ENCODE measurements at regions of chr6 and their contacts with region 1.

Region 1: GRCh38 chr6:131909408-131910218 is 41.6 kb downstream of the CCN2 start:
- DNase-seq: peak; percentile 60
- ATAC-seq: peak; percentile 97
- H3K4me3 ChIP-seq: no peak overlapping the region
- H3K27ac ChIP-seq: no peak overlapping the region
- H3K4me1 ChIP-seq: no peaks in the 10 kb centered on the region; the same call in 1 of the 2 replicates
- H3K27me3 ChIP-seq: peaks cover 11% of the 10 kb centered on the region; the same call in 1 of the 2 replicates
- CTCF ChIP-seq: peak; percentile 77; the same call in 1 of the 2 replicates

Region 2: DNA sequence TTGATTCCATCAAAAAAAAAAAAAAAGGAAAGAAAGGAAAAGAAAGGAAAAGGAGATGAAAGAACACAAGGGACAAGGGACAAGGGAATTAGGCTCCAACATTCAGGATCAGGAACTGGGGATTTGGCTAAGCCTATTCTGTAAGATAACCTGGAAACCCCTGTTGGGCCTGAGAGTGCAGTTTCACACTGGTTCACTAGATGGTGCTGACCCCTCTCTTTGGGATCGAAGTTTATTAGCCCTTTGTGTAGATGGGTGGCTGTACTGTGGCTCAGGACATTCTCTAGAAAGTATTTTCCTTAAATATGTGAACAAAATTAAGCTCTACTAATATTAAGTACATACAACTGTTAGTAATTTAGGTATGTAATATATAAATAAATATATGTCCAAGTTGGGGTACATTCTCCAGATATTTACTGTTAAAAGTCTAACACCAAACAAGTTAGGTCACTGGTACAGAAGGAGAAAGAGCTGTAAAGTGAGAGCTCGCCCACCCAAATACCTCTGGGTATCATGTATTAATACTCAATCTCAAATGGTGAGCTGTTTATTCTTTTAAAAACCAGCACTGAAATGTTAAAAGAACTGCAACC is 214.7 kb before region 1 on chr6:
- CTCF ChIA-PET with region 1: interaction called, 6 read pairs
- POLR2A ChIA-PET with region 1: no interaction called
- in situ Hi-C with region 1: no loop called
- intact Hi-C with region 1: loop called (anchors 1 kb)
- DNase-seq: peak; percentile 63
- ATAC-seq: peak; percentile 99
- H3K4me3 ChIP-seq: no peak overlapping the region
- H3K27ac ChIP-seq: no peak overlapping the region
- H3K4me1 ChIP-seq: no peaks in the 10 kb centered on the region
- H3K27me3 ChIP-seq: no peaks in the 10 kb centered on the region
- CTCF ChIP-seq: peak; percentile 89

Region 3: DNA sequence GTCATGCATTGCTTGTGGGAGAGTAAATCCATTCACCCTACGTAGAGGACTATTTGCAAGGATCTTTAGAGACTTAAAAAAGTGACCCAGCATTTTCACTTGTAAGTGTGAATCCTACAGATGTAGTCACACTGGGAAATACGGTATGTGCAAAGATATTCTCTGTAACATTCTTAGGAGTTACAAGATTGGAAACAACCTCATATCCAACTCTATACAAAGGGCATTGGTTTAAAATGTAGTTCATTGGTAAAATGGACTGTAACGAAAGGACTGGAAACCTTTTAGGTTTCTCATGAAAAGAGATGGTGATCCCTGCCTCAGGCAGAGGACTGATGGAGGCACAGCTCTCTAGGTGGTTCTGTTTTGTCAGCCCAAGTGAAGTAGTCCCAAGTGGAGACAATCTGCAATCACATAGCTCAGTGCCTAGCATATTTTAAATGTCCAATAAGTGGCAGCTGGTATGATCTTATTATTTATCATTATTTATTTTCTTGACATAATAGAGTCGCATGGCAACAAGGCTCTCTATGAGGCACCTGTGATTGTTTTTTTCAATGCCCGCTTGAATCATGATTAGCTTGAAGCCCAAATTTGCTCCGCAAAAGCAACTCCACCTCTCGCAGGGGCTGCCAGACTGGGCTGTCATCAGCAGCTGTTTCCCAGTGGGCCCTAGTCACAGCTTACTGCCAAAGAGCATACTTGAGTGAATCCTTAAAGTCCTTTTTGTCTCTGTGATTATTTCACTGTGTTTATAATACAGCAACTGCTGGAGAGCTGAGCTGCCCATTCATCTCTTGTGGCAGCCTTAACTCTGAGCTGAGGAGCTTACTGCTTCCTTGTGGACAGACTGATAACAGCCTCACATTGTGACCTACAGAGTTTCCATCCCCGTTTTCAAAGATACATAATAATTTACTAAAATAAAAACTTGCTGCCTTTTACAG is 121.6 kb before region 1 on chr6:
- CTCF ChIA-PET with region 1: interaction called, 3 read pairs
- POLR2A ChIA-PET with region 1: no interaction called
- in situ Hi-C with region 1: no loop called
- intact Hi-C with region 1: loop called (anchors 10 kb)
- DNase-seq: no peak
- ATAC-seq: no peak
- H3K4me3 ChIP-seq: no peak overlapping the region
- H3K27ac ChIP-seq: no peak overlapping the region
- H3K4me1 ChIP-seq: no peaks in the 10 kb centered on the region
- H3K27me3 ChIP-seq: no peaks in the 10 kb centered on the region; the same call in 1 of the 2 replicates
- CTCF ChIP-seq: peak; percentile 8; the same call in 1 of the 2 replicates